CD4-positive, alpha-beta T cell (primary cell): ENCODE measurements at regions of chr12 and their contacts with region 1.

Region 1: GRCh38 chr12:71846322-71846940 is 6.9 kb downstream of the TBC1D15 start:
- DNase-seq: peak in 4 of 14 experiments; percentile 13 to 65 (median 56)
- ATAC-seq: peak; percentile 78
- H3K4me3 ChIP-seq: no peak overlapping the region
- H3K4me3 Mint-ChIP-seq: no peak overlapping the region
- H3K27ac ChIP-seq: no peak overlapping the region
- H3K27ac Mint-ChIP-seq: peak overlapping the region; percentile 4
- H3K4me1 ChIP-seq: peaks cover 8% of the 10 kb centered on the region
- H3K4me1 Mint-ChIP-seq: peaks cover 34% of the 10 kb centered on the region
- H3K27me3 ChIP-seq: no peaks in the 10 kb centered on the region
- H3K27me3 Mint-ChIP-seq: no peaks in the 10 kb centered on the region
- CTCF ChIP-seq: peak; percentile 68

Region 2: DNA sequence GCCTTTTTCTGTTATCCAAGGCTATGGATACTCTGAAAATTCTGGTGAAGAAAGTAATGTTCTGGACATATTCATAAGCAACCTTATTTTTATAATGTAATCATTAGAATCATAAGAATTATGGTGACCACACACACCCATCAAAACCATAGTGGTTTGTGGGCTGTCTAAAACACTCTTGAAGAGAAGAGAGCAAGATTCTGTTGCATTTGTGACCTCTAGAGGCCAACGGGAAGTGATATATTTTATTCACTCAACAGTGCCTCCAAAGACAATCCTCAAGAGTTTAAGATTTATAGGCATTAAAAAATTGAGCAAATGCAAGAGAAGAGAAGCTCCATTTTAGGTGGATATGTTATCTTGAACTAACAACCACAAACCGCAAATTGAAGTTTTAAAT is 475.3 kb before region 1 on chr12:
- CTCF ChIA-PET with region 1: no interaction called
- POLR2A ChIA-PET with region 1: no interaction called
- intact Hi-C with region 1: no loop called
- DNase-seq: no peak
- ATAC-seq: no peak
- H3K4me3 ChIP-seq: no peak overlapping the region
- H3K4me3 Mint-ChIP-seq: no peak overlapping the region
- H3K27ac ChIP-seq: no peak overlapping the region
- H3K27ac Mint-ChIP-seq: no peak overlapping the region
- H3K4me1 ChIP-seq: no peaks in the 10 kb centered on the region
- H3K4me1 Mint-ChIP-seq: no peaks in the 10 kb centered on the region
- H3K27me3 ChIP-seq: no peaks in the 10 kb centered on the region
- H3K27me3 Mint-ChIP-seq: no peaks in the 10 kb centered on the region
- CTCF ChIP-seq: no peak

Region 3: GRCh38 chr12:71456316-71456715 is 390.1 kb before region 1 on chr12:
- CTCF ChIA-PET with region 1: no interaction called
- POLR2A ChIA-PET with region 1: no interaction called
- intact Hi-C with region 1: no loop called
- DNase-seq: no peak
- ATAC-seq: no peak
- H3K4me3 ChIP-seq: no peak overlapping the region
- H3K4me3 Mint-ChIP-seq: no peak overlapping the region
- H3K27ac ChIP-seq: no peak overlapping the region
- H3K27ac Mint-ChIP-seq: no peak overlapping the region
- H3K4me1 ChIP-seq: no peaks in the 10 kb centered on the region
- H3K4me1 Mint-ChIP-seq: no peaks in the 10 kb centered on the region
- H3K27me3 ChIP-seq: peaks cover 0 to 5% of the 10 kb centered on the region in 2 experiments
- H3K27me3 Mint-ChIP-seq: peaks cover 25% of the 10 kb centered on the region
- CTCF ChIP-seq: no peak

Region 4: GRCh38 chr12:71780237-71780822 is 66.1 kb before region 1 on chr12:
- CTCF ChIA-PET with region 1: interaction called, 16 read pairs
- POLR2A ChIA-PET with region 1: interaction called, 7 read pairs
- intact Hi-C with region 1: loop called (anchors 1 kb)
- DNase-seq: peak; percentile 19 to 70 (median 34)
- ATAC-seq: no peak
- H3K4me3 ChIP-seq: no peak overlapping the region
- H3K4me3 Mint-ChIP-seq: no peak overlapping the region
- H3K27ac ChIP-seq: no peak overlapping the region
- H3K27ac Mint-ChIP-seq: peak overlapping the region; percentile 37
- H3K4me1 ChIP-seq: no peaks in the 10 kb centered on the region
- H3K4me1 Mint-ChIP-seq: peaks cover 16% of the 10 kb centered on the region
- H3K27me3 ChIP-seq: no peaks in the 10 kb centered on the region
- H3K27me3 Mint-ChIP-seq: no peaks in the 10 kb centered on the region
- CTCF ChIP-seq: peak; percentile 80

Region 5: GRCh38 chr12:71876137-71876799 is 29.8 kb after region 1 on chr12:
- CTCF ChIA-PET with region 1: no interaction called
- POLR2A ChIA-PET with region 1: no interaction called
- intact Hi-C with region 1: loop called in 1 of 2 experiments (anchors 5 kb)
- DNase-seq: no peak
- ATAC-seq: no peak
- H3K4me3 ChIP-seq: no peak overlapping the region
- H3K4me3 Mint-ChIP-seq: no peak overlapping the region
- H3K27ac ChIP-seq: no peak overlapping the region
- H3K27ac Mint-ChIP-seq: no peak overlapping the region
- H3K4me1 ChIP-seq: no peaks in the 10 kb centered on the region
- H3K4me1 Mint-ChIP-seq: peaks cover 43% of the 10 kb centered on the region
- H3K27me3 ChIP-seq: no peaks in the 10 kb centered on the region
- H3K27me3 Mint-ChIP-seq: no peaks in the 10 kb centered on the region
- CTCF ChIP-seq: no peak

Region 6: DNA sequence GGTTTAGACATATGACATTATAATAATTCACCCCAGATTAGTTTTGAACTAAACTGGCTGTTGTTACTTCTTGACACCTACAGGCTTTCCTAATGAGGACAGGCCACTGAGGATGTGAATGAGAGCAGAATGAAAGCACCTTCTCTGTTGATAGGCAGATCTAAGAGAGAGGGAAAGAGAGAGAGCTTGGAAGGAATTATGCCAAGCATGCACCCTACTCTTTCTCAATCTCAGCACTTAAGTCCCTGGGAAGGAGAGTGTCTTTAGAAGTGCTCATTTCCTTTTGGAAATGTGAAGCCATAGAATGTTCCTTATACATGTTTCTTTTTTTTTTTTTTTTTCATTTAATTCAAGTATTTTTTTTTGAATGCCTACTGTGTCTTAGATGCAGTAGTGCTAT is 42.1 kb after region 1 on chr12:
- CTCF ChIA-PET with region 1: no interaction called
- POLR2A ChIA-PET with region 1: no interaction called
- intact Hi-C with region 1: loop called (anchors 5 kb)
- DNase-seq: no peak
- ATAC-seq: no peak
- H3K4me3 ChIP-seq: no peak overlapping the region
- H3K4me3 Mint-ChIP-seq: no peak overlapping the region
- H3K27ac ChIP-seq: no peak overlapping the region
- H3K27ac Mint-ChIP-seq: no peak overlapping the region
- H3K4me1 ChIP-seq: no peaks in the 10 kb centered on the region
- H3K4me1 Mint-ChIP-seq: peaks cover 44% of the 10 kb centered on the region
- H3K27me3 ChIP-seq: no peaks in the 10 kb centered on the region
- H3K27me3 Mint-ChIP-seq: no peaks in the 10 kb centered on the region
- CTCF ChIP-seq: no peak